Gastrocnemius medialis (tissue), 4 donors: ENCODE measurements at regions of chr12 and their contacts with region 1.

Region 1: DNA sequence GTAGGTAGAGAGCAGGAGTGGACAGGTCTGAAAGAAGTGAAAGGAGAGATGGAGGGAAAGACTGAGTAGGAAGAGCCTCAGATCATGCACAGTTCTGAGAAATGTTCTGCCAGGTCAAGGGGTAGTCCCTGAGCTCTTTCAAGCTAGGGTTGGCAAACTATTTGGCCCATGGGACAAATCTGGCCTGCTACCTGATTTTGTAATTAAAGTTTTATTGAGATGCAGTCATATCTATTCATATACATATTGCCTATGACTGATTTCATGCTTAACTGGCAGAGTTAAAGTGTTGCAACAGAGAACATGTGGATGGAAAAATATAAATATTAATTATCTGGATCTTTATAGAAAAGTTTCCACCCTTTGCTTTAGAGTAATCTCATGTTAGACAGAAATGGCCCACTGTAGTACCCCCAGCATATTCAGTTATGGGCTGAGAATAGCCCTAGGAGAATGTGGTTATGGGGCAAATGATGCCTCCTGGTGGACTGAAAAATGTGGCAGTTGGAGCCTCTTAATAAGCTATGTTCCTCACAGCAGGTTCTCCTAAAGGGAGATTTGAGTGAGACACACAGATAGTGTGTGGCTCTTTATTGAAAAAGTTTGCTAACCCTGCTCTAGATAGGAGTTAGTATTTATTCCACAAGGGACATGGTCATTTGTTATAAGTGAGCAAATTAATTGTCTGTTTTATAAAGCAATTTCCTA is 476.9 kb downstream of the LRIG3 start:
- DNase-seq: no peak
- ATAC-seq: peak in 1 of 2 donors; percentile 51
- H3K4me3 ChIP-seq: no peak overlapping the region
- H3K27ac ChIP-seq: peak overlapping the region in 3 of 4 donors; percentile 27 to 71 (median 33)
- H3K4me1 ChIP-seq: no peaks in the 10 kb centered on the region
- H3K27me3 ChIP-seq: no peaks in the 10 kb centered on the region
- CTCF ChIP-seq: peak in 2 of 5 experiments; percentile 26 to 38
- POLR2A ChIP-seq: no peak

Region 2: GRCh38 chr12:57983146-57983857 is 460.1 kb before region 1 on chr12:
- in situ Hi-C with region 1: no loop called
- intact Hi-C with region 1: loop called (anchors 10 kb)
- DNase-seq: no peak
- ATAC-seq: no peak
- H3K4me3 ChIP-seq: no peak overlapping the region
- H3K27ac ChIP-seq: no peak overlapping the region
- H3K4me1 ChIP-seq: no peaks in the 10 kb centered on the region
- H3K27me3 ChIP-seq: no peaks in the 10 kb centered on the region
- CTCF ChIP-seq: peak in 4 of 5 experiments; percentile 38 to 62 (median 48)
- POLR2A ChIP-seq: no peak

Region 3: DNA sequence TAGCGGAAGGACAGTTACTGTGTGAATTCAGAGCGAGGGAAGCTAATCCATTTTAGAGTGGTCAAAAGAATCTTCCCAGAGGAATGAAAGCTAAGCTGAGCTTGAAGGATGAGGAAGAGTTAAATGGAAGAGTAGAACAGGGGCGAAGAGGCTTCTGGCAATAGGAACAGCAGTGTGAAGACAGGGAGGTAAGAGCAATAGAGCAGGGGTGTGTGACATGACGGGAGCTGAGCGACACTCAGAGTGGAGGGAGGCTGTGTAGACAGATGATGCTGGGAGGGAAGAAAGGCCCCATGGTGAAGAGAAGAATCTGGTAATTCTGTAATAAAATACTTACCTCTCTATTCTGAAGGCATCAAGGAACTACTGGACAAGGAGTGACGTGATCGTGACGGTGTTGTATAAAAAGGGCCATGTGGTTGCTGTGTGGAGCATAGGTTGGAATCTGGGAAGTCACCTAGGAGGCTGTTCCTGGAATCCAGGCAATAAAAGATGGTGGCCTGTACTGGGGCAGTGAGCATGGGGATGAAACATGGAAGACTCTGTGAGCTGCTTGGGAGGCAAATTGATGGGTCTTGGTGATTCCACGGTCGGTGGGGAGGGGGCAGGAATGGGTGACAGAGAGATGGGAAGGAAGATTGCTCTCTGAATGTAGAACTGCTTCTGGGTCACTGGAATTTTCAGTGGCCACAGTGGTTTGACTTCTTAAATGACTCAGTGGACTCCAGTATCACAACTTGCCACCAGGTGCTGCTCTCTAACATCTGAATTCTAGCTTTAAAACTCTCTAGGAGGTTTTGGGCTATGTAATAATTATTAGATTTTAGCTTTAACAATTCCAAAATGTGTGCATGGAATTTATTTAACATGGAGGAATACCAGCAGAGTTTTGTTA is 338.0 kb before region 1 on chr12:
- in situ Hi-C with region 1: no loop called
- intact Hi-C with region 1: loop called (anchors 10 kb)
- DNase-seq: no peak
- ATAC-seq: peak in 1 of 2 donors; percentile 32
- H3K4me3 ChIP-seq: no peak overlapping the region
- H3K27ac ChIP-seq: peak overlapping the region; percentile 36 to 79 (median 74)
- H3K4me1 ChIP-seq: peaks cover 11 to 22% of the 10 kb centered on the region in 2 donors
- H3K27me3 ChIP-seq: no peaks in the 10 kb centered on the region
- CTCF ChIP-seq: peak in 2 of 5 experiments; percentile 21 to 37
- POLR2A ChIP-seq: no peak

Region 4: GRCh38 chr12:58919231-58920101 is 476.0 kb after region 1 on chr12:
- in situ Hi-C with region 1: no loop called
- intact Hi-C with region 1: loop called (anchors 10 kb)
- DNase-seq: peak; percentile 5 to 20
- ATAC-seq: peak; percentile 42 to 54
- H3K4me3 ChIP-seq: peak overlapping the region; percentile 62 to 96 (median 88)
- H3K27ac ChIP-seq: peak overlapping the region; percentile 85 to 95 (median 93)
- H3K4me1 ChIP-seq: peaks cover 35 to 37% of the 10 kb centered on the region in 2 donors
- H3K27me3 ChIP-seq: no peaks in the 10 kb centered on the region
- CTCF ChIP-seq: peak in 1 of 5 experiments; percentile 4
- POLR2A ChIP-seq: no peak